Activated B cell treated with CpG ODN at 0.5 μM for 24 hours (primary cell): ENCODE measurements at regions of chr11 and their contacts with region 1.

Region 1: GRCh38 chr11:78377613-78378418 is 39.8 kb downstream of the GAB2 start:
- DNase-seq: no peak
- ATAC-seq: no peak
- H3K4me3 Mint-ChIP-seq: no peak overlapping the region
- H3K27ac Mint-ChIP-seq: no peak overlapping the region
- H3K4me1 Mint-ChIP-seq: peaks cover 19% of the 10 kb centered on the region
- H3K27me3 Mint-ChIP-seq: no peaks in the 10 kb centered on the region
- CTCF ChIP-seq: no peak

Region 2: GRCh38 chr11:78338138-78338537 is 39.7 kb before region 1 on chr11:
- CTCF ChIA-PET with region 1: no interaction called
- POLR2A ChIA-PET with region 1: no interaction called
- intact Hi-C with region 1: no loop called
- DNase-seq: no peak
- ATAC-seq: no peak
- H3K4me3 Mint-ChIP-seq: no peak overlapping the region
- H3K27ac Mint-ChIP-seq: no peak overlapping the region
- H3K4me1 Mint-ChIP-seq: peaks cover 37% of the 10 kb centered on the region
- H3K27me3 Mint-ChIP-seq: no peaks in the 10 kb centered on the region
- CTCF ChIP-seq: no peak

Region 3: GRCh38 chr11:78363018-78363619 is 14.7 kb before region 1 on chr11:
- CTCF ChIA-PET with region 1: interaction called, 3 read pairs
- POLR2A ChIA-PET with region 1: no interaction called
- intact Hi-C with region 1: loop called (anchors 2 kb)
- DNase-seq: no peak
- ATAC-seq: no peak
- H3K4me3 Mint-ChIP-seq: no peak overlapping the region
- H3K27ac Mint-ChIP-seq: no peak overlapping the region
- H3K4me1 Mint-ChIP-seq: peaks cover 11% of the 10 kb centered on the region
- H3K27me3 Mint-ChIP-seq: no peaks in the 10 kb centered on the region
- CTCF ChIP-seq: no peak